ENCODE measurements at regions of chr3 and their contacts with region 1.

Region 1: DNA sequence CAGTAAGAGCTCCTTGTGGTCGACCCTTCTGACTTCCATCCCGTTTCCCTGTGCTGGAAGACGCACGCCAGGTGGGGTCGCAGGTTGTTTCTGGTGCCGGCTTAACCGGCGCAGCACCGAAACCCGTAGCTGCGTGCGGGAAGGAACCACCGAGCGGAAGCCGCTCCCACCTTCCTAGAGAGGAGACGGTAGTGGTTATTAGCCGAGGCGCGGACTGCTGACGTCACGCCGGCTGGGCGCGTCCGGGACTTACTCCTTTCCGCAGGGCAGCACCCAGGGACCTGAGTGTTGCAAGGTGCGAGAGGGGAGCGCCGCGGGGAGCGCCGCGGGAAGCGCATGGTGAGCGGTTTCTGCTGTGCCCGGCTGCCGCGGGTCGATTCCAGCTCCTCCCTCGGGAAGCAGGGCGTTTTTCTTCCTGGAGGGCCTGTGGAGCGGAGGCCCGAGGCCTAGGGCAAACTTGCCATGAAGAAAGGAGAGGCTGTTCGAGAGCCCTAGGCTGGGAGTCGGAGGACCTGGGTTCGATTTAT is at the start of gene ZNF501:
- DNase-seq: peak; percentile 98
- ATAC-seq: peak; percentile 99
- total RNA-seq, gene ZNF501: 5.4 TPM

Region 2: GRCh38 chr3:44712455-44713075 is 16.9 kb before region 1 on chr3 and contains the start of gene ZNF502:
- intact Hi-C with region 1: loop called (anchors 2 kb)
- DNase-seq: peak; percentile 92
- ATAC-seq: peak; percentile 98
- total RNA-seq, gene ZNF502: 2.4 TPM